PC-3 (cell line): ENCODE measurements at regions of chr5 and their contacts with region 1.

Region 1: GRCh38 chr5:114500756-114501155 is 138.9 kb downstream of the KCNN2 start:
- DNase-seq: no peak
- ATAC-seq: no peak
- H3K4me3 ChIP-seq: no peak overlapping the region
- H3K27ac ChIP-seq: no peak overlapping the region
- H3K4me1 ChIP-seq: no peaks in the 10 kb centered on the region
- H3K27me3 ChIP-seq: no peaks in the 10 kb centered on the region
- CTCF ChIP-seq: no peak

Region 2: GRCh38 chr5:114097570-114097969 is 403.2 kb before region 1 on chr5:
- CTCF ChIA-PET with region 1: no interaction called
- POLR2A ChIA-PET with region 1: no interaction called
- intact Hi-C with region 1: loop called (anchors 5 kb)
- DNase-seq: no peak
- ATAC-seq: no peak
- H3K4me3 ChIP-seq: no peak overlapping the region
- H3K27ac ChIP-seq: no peak overlapping the region
- H3K4me1 ChIP-seq: no peaks in the 10 kb centered on the region
- H3K27me3 ChIP-seq: no peaks in the 10 kb centered on the region; the same call in 1 of the 2 replicates
- CTCF ChIP-seq: peak; percentile 45; the same call in 1 of the 2 replicates